ENCODE measurements at regions of chr3 and their contacts with region 1.

Region 1: DNA sequence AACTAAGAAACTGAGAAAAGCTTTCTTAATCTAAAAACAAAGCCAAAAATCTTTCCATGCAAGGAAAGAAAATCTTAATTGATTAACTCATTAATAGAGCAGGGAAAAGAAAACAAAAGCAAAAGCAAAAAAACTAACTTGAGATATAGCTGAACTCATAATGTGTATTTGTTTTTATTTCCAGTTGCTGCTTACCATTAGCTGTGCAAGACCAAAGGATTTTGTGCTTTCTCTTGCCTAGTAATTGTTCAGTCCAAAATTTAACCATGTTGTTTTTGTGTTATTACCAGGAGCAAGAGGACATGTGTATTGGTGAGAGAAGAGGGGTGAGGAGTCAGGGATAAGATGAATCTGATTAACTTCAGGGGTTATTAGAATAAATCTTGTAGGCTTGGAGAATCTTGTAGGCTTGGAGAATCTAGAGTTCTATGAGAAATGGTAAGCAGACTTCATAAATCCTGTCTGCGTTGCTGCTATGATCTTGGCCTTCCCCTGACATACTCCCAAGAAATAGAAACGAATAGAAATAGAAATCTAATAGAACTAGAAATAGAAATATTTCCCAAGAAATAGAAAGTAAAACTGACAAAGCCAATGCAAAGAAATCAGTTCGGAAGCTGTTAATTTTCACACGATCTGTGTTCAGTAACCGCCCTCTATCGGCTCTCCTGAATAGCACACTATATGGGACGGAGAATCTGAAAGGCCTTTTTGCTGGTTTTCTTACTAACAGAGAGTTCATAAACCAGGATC is 72.6 kb upstream of the TNFSF10 start:
- DNase-seq: peak; percentile 72
- ATAC-seq: peak; percentile 71
- H3K4me3 ChIP-seq: peak overlapping the region in 4 of 5 experiments; percentile 22 to 50 (median 36)
- H3K4me3 Mint-ChIP-seq: peak overlapping the region; percentile 77
- H3K27ac ChIP-seq: peak overlapping the region in 1 of 2 donors; percentile 17
- H3K27ac Mint-ChIP-seq: peak overlapping the region; percentile 18
- H3K4me1 ChIP-seq: peaks cover 22 to 30% of the 10 kb centered on the region in 2 donors
- H3K4me1 Mint-ChIP-seq: peaks cover 33% of the 10 kb centered on the region
- H3K27me3 ChIP-seq: no peaks in the 10 kb centered on the region
- H3K27me3 Mint-ChIP-seq: no peaks in the 10 kb centered on the region
- CTCF ChIP-seq: peak; percentile 91

Region 2: DNA sequence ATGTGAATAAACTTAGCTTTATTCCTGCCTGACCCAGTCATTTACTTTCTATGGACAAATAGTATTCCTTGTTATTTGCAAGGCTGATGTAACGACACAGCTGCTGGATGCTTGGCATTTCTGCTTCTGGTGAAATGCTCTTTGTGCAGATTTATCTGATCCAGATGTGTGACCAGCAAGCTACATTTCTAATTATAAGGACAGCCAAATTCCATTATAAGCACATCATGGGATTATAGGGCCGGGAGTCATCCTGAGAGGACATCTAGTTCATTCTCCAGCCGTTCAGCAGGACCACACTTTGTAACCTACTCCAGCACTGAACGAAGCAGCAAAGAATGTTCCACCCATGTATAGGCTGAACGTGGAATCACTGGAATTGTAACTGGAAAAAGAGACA is 513.5 kb before region 1 on chr3:
- CTCF ChIA-PET with region 1: no interaction called
- POLR2A ChIA-PET with region 1: no interaction called
- intact Hi-C with region 1: no loop called
- DNase-seq: no peak
- ATAC-seq: no peak
- H3K4me3 ChIP-seq: no peak overlapping the region
- H3K4me3 Mint-ChIP-seq: no peak overlapping the region
- H3K27ac ChIP-seq: no peak overlapping the region
- H3K27ac Mint-ChIP-seq: no peak overlapping the region
- H3K4me1 ChIP-seq: no peaks in the 10 kb centered on the region
- H3K4me1 Mint-ChIP-seq: no peaks in the 10 kb centered on the region
- H3K27me3 ChIP-seq: no peaks in the 10 kb centered on the region
- H3K27me3 Mint-ChIP-seq: peaks cover 3% of the 10 kb centered on the region
- CTCF ChIP-seq: no peak

Region 3: GRCh38 chr3:172461530-172462138 is 134.2 kb before region 1 on chr3:
- CTCF ChIA-PET with region 1: interaction called, 36 read pairs
- POLR2A ChIA-PET with region 1: no interaction called
- intact Hi-C with region 1: no loop called
- DNase-seq: peak; percentile 46
- ATAC-seq: no peak
- H3K4me3 ChIP-seq: no peak overlapping the region
- H3K4me3 Mint-ChIP-seq: no peak overlapping the region
- H3K27ac ChIP-seq: no peak overlapping the region
- H3K27ac Mint-ChIP-seq: no peak overlapping the region
- H3K4me1 ChIP-seq: no peaks in the 10 kb centered on the region
- H3K4me1 Mint-ChIP-seq: no peaks in the 10 kb centered on the region
- H3K27me3 ChIP-seq: peaks cover 0 to 5% (median 0%) of the 10 kb centered on the region in 4 experiments
- H3K27me3 Mint-ChIP-seq: peaks cover 12% of the 10 kb centered on the region
- CTCF ChIP-seq: peak; percentile 100

Region 4: DNA sequence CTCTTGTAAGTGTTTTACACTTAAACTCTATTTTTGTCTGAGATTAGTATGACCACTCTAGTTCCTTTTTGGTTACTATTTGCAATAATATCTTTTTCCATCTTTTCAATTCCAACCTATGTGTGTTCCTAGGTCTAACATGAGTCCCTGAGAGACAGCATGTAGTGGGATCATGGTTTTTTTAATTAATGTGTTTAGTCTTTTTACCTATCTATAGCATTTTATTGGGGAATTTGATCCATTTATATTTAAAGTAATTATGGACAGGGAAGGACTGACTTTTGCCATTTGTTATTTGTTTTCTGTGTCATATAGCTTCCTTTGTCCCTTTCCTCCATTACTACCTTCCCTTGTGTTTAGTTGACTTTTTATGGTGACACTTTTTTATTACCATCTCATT is 94.3 kb before region 1 on chr3:
- CTCF ChIA-PET with region 1: interaction called, 66 read pairs
- POLR2A ChIA-PET with region 1: no interaction called
- intact Hi-C with region 1: no loop called
- DNase-seq: no peak
- ATAC-seq: no peak
- H3K4me3 ChIP-seq: no peak overlapping the region
- H3K4me3 Mint-ChIP-seq: no peak overlapping the region
- H3K27ac ChIP-seq: no peak overlapping the region
- H3K27ac Mint-ChIP-seq: no peak overlapping the region
- H3K4me1 ChIP-seq: no peaks in the 10 kb centered on the region
- H3K4me1 Mint-ChIP-seq: no peaks in the 10 kb centered on the region
- H3K27me3 ChIP-seq: peaks cover 0 to 3% (median 0%) of the 10 kb centered on the region in 4 experiments
- H3K27me3 Mint-ChIP-seq: no peaks in the 10 kb centered on the region
- CTCF ChIP-seq: no peak

Region 5: DNA sequence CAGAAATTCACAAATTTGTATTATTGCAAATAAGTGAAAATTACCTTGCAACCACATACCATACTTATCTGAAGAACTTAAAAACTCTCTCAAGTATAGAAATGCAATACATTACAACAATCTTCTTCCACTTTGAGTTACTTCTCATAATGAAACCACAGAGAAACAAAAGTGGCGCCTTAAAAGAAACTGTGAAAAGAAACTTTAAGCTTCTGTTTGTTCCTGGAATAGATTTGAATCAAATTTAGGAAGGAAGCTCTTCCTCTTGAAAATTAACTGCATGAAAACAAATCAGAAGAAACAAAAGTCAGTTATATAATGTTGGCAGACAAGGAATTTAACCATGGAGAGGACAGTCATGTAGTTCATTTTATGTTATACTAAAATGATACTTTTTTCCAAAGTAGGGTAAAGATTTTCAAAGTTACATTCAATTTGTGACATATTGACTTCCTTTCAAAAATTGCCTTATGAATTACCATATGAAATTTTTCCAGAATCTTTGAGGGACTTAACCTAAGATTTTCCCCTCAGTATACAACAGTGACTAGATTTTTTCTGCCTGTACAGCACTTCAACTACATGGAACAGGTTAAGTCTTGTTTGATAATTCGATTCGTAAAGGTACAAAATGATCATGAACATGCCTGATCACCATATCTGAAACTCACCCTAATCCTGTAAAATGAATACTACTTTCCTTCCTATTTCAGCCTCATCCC is 15.0 kb before region 1 on chr3:
- CTCF ChIA-PET with region 1: interaction called, 12 read pairs
- POLR2A ChIA-PET with region 1: no interaction called
- intact Hi-C with region 1: no loop called
- DNase-seq: no peak
- ATAC-seq: no peak
- H3K4me3 ChIP-seq: no peak overlapping the region
- H3K4me3 Mint-ChIP-seq: no peak overlapping the region
- H3K27ac ChIP-seq: no peak overlapping the region
- H3K27ac Mint-ChIP-seq: no peak overlapping the region
- H3K4me1 ChIP-seq: peaks cover 11 to 19% of the 10 kb centered on the region in 2 donors
- H3K4me1 Mint-ChIP-seq: peaks cover 32% of the 10 kb centered on the region
- H3K27me3 ChIP-seq: no peaks in the 10 kb centered on the region
- H3K27me3 Mint-ChIP-seq: no peaks in the 10 kb centered on the region
- CTCF ChIP-seq: no peak

Region 6: DNA sequence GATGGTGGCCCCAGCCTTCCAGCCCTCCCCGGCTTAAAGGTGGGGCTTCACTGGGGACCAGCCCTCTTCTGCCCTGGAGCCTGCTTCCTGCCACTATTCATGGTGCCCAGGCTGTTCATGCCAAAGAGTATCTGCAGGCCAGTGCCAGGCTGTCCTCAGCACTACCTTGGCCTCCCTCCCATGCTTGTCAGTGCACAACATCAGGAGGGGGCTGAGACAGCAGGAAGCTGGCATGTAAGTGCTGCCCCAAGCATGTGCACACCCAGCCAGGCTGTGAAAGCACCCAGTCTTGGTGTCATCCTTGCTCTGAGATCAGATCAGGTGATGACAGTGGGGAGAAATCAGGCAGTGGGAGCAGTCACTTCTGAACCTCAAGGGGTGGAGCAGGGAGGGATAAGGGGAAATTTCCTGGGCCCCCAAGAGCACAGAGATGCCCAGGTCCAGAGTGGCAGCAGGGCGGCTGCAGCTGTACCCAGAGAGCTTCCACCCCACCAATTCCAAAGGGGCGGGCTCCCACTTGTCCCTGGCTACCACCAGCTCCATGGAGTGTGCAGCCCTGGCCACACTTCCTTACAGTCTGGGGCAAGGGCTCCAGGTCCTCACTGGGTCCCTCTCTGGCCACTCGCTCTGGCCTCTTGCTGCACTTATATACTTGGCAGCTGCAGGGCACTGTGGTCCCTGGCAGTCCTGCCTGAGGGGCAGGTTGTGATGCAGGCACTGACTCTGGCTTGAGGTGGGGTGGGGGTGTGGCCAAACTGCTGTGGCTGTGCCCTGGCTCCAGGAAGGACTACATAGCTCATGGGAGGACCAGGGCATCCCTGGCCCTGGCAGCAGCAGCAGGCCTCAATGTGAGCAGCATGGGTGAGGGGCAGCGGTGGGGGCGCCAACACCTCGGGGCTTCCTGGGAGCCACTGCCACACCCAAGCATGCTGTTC is 18.8 kb after region 1 on chr3:
- CTCF ChIA-PET with region 1: interaction called, 24 read pairs
- POLR2A ChIA-PET with region 1: no interaction called
- intact Hi-C with region 1: no loop called
- DNase-seq: no peak
- ATAC-seq: no peak
- H3K4me3 ChIP-seq: no peak overlapping the region
- H3K4me3 Mint-ChIP-seq: no peak overlapping the region
- H3K27ac ChIP-seq: no peak overlapping the region
- H3K27ac Mint-ChIP-seq: no peak overlapping the region
- H3K4me1 ChIP-seq: no peaks in the 10 kb centered on the region
- H3K4me1 Mint-ChIP-seq: peaks cover 9% of the 10 kb centered on the region
- H3K27me3 ChIP-seq: no peaks in the 10 kb centered on the region
- H3K27me3 Mint-ChIP-seq: no peaks in the 10 kb centered on the region
- CTCF ChIP-seq: no peak

Region 7: DNA sequence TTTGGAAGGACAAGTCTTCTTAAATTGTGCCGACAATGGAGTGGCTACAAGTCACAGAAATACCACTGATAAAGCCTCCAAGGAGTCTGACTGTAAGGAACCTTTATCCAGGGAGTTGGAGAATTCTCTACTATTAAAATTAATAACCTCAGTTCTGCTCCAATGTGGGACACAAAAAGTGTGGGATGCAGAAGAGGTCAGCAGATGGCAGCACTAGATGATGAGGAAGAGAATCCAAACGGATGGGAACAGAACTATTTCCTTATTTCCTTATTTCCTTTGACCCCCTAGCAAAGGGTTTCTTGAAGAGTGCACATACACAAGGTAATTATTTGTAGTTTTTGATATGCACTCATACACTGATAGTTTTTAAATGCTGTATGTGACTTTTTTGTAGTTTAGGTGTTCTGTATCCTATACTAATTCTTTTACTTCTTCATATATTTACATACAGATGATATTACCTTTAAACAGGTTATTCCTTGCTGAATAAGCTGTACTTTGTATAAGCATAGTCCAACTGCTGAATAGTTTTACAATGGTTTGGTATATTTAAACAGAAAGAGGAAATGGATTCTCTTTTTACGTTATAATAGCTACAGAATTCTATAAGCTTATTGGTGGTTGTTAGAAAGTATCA is 776.2 kb after region 1 on chr3:
- CTCF ChIA-PET with region 1: no interaction called
- POLR2A ChIA-PET with region 1: no interaction called
- intact Hi-C with region 1: no loop called
- DNase-seq: no peak
- ATAC-seq: no peak
- H3K4me3 ChIP-seq: no peak overlapping the region
- H3K4me3 Mint-ChIP-seq: no peak overlapping the region
- H3K27ac ChIP-seq: no peak overlapping the region
- H3K27ac Mint-ChIP-seq: no peak overlapping the region
- H3K4me1 ChIP-seq: no peaks in the 10 kb centered on the region
- H3K4me1 Mint-ChIP-seq: no peaks in the 10 kb centered on the region
- H3K27me3 ChIP-seq: no peaks in the 10 kb centered on the region
- H3K27me3 Mint-ChIP-seq: no peaks in the 10 kb centered on the region
- CTCF ChIP-seq: no peak